A549 (cell line): ENCODE measurements at regions of chr19 and their contacts with region 1.

Region 1: DNA sequence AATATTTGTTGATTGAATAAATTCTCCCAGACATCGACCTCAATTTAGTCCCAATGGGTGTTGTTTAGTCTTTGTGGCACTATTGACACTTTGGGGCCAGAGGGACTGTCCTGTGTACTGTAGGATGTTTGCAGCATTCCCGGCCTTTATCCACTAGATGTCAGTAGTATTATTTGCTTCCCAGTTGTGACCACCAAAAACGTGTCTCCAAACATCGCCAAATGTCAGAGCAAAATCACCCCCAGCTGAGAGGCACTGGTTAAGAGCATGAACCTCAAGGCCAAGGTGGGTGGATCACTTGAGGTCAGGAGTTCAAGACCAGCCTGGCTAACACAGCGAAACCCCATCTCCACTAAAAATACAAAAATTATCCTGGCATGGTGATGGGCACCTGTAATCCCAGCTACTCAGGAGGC is 15.4 kb downstream of the NLRP12 start:
- DNase-seq: peak; percentile 52 to 85
- ATAC-seq: peak; percentile 87 to 91
- H3K4me3 ChIP-seq: no peak overlapping the region
- H3K27ac ChIP-seq: no peak overlapping the region
- H3K4me1 ChIP-seq: no peaks in the 10 kb centered on the region
- CTCF ChIP-seq: peak; percentile 86
- EP300 ChIP-seq: no peak
- POLR2A ChIP-seq: no peak
- RAD21 ChIP-seq: peak; percentile 88 to 98

Region 2: DNA sequence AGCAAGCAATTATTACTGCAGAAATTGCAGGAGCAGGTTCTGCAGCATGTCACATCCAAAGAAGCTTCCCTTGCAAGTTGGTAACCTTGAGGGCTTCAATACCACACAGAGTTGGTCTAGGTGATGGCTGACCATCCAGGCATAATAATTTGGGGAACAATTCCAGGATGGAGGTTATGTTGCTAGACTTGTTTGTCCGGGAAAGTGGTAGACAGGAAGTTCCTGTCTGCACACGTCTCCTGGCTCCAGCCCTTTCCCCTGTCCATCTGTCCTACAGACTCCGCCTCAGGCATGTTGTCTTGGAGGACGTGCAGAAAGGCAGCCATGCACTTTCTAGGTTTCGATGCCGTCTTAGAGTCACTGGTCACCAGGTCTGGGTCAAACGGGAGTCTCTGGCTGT is 150.9 kb before region 1 on chr19:
- CTCF ChIA-PET with region 1: no interaction called
- POLR2A ChIA-PET with region 1: no interaction called
- DNase-seq: no peak
- ATAC-seq: no peak
- H3K4me3 ChIP-seq: no peak overlapping the region
- H3K27ac ChIP-seq: no peak overlapping the region
- H3K4me1 ChIP-seq: no peaks in the 10 kb centered on the region
- CTCF ChIP-seq: no peak
- EP300 ChIP-seq: no peak
- POLR2A ChIP-seq: no peak
- RAD21 ChIP-seq: no peak

Region 3: DNA sequence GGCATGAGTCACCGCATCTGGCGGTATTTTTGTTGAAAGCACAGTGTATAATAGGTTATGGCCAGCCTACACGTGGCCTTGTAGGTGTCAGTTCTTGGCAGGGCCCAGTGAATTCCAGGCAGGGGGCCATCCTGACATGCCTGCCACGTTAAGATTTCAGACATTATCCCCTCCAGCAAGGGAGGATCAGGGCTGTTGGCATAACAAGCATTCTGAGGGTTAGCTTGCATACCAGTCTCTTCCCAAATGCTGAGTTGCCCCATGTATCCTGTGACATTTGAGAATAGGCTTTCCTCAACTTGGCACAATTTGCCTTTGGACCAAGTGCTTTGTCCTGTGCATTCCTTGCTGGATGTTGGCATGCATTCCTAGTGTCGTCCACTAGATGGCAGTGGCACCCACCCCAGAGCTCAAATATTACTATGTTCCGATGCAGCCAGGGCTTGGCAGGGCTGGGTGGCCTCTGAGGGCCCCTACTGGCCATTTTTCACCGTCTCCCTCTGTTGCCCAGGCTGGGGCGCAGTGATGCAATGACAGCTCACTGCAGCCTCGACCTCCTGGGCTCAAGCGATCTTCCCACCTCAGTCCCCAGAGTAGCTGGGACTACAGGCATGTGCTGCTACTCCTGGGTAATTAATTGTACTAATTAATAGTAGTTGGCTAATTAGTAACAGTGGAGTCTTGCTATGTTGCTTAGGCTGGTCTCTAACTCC is 15.8 kb before region 1 on chr19:
- CTCF ChIA-PET with region 1: interaction called, 23 read pairs
- POLR2A ChIA-PET with region 1: no interaction called
- DNase-seq: peak; percentile 73 to 92
- ATAC-seq: peak; percentile 97 to 99
- H3K4me3 ChIP-seq: no peak overlapping the region
- H3K27ac ChIP-seq: no peak overlapping the region
- H3K4me1 ChIP-seq: no peaks in the 10 kb centered on the region
- CTCF ChIP-seq: peak; percentile 98
- EP300 ChIP-seq: no peak
- POLR2A ChIP-seq: no peak
- RAD21 ChIP-seq: peak; percentile 84 to 95

Region 4: DNA sequence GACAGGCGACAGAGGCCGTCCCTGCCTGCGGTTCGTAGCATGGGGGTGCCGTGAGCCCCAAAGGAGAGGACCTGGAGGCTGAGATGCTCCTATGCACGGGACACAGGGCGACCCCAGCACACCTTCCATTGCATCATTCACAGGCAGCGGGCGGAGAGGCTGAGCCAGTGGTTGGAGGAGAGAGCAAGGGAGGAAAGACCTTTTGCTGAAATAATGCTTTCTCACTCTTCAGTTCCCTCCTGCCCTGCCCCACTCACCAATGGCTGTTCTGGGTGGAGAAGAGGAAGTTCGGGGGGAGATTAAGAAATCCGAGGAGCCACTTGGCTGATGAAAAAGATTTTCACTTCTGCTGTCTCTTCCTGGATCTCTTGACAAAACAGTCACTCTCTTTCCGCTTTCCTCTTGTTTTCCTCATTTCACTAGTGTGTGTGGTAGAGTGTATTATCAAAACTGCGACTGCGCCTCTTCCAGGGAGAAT is 15.5 kb after region 1 on chr19 and contains the start of gene NLRP12:
- CTCF ChIA-PET with region 1: interaction called, 47 read pairs
- POLR2A ChIA-PET with region 1: no interaction called
- DNase-seq: no peak
- ATAC-seq: peak in 1 of 2 experiments; percentile 37; a peak in 3 of 6 replicates
- H3K4me3 ChIP-seq: no peak within 1 kb of the TSS
- H3K27ac ChIP-seq: no peak within 1 kb of the TSS
- H3K4me1 ChIP-seq: no peaks in the 10 kb centered on the region
- CTCF ChIP-seq: no peak
- EP300 ChIP-seq: no peak
- POLR2A ChIP-seq: no peak
- RAD21 ChIP-seq: no peak
- polyA plus RNA-seq, gene NLRP12: 0.03 and 0.04 TPM in 2 replicates

Region 5: GRCh38 chr19:53849237-53849676 is 40.5 kb after region 1 on chr19:
- CTCF ChIA-PET with region 1: interaction called, 10 read pairs
- POLR2A ChIA-PET with region 1: no interaction called
- DNase-seq: no peak
- ATAC-seq: no peak
- H3K4me3 ChIP-seq: no peak overlapping the region
- H3K27ac ChIP-seq: no peak overlapping the region
- H3K4me1 ChIP-seq: peaks cover 8% of the 10 kb centered on the region; the same call in 2 of the 3 replicates
- CTCF ChIP-seq: no peak
- EP300 ChIP-seq: no peak
- POLR2A ChIP-seq: no peak
- RAD21 ChIP-seq: no peak

Region 6: GRCh38 chr19:53879140-53880081 is 70.7 kb after region 1 on chr19:
- CTCF ChIA-PET with region 1: interaction called, 32 read pairs
- POLR2A ChIA-PET with region 1: no interaction called
- DNase-seq: peak; percentile 92 to 93
- ATAC-seq: peak; percentile 64 to 78
- H3K4me3 ChIP-seq: peak overlapping the region; percentile 44
- H3K27ac ChIP-seq: peak overlapping the region; percentile 72 to 89
- H3K4me1 ChIP-seq: peaks cover 21% of the 10 kb centered on the region
- CTCF ChIP-seq: no peak
- EP300 ChIP-seq: no peak
- POLR2A ChIP-seq: no peak
- RAD21 ChIP-seq: no peak

Region 7: GRCh38 chr19:54035215-54036178 is 226.8 kb after region 1 on chr19:
- CTCF ChIA-PET with region 1: interaction called, 148 read pairs
- POLR2A ChIA-PET with region 1: no interaction called
- DNase-seq: peak in 1 of 2 experiments; percentile 52
- ATAC-seq: peak; percentile 65 to 88
- H3K4me3 ChIP-seq: no peak overlapping the region
- H3K27ac ChIP-seq: peak overlapping the region; percentile 36 to 59; a peak in 5 of 6 replicates
- H3K4me1 ChIP-seq: peaks cover 9% of the 10 kb centered on the region
- CTCF ChIP-seq: no peak
- EP300 ChIP-seq: no peak
- POLR2A ChIP-seq: no peak
- RAD21 ChIP-seq: no peak

Region 8: GRCh38 chr19:54096617-54097129 is 288.0 kb after region 1 on chr19:
- CTCF ChIA-PET with region 1: interaction called, 35 read pairs
- POLR2A ChIA-PET with region 1: no interaction called
- DNase-seq: peak; percentile 68 to 79
- ATAC-seq: peak; percentile 88 to 89
- H3K4me3 ChIP-seq: peak overlapping the region; percentile 33
- H3K27ac ChIP-seq: peak overlapping the region; percentile 40 to 78; a peak in 5 of 6 replicates
- H3K4me1 ChIP-seq: peaks cover 11% of the 10 kb centered on the region; the same call in 1 of the 3 replicates
- CTCF ChIP-seq: no peak; the same call in 2 of the 3 replicates
- EP300 ChIP-seq: no peak
- POLR2A ChIP-seq: peak; percentile 17; the same call in 1 of the 2 replicates
- RAD21 ChIP-seq: peak in 1 of 2 experiments; percentile 65; a peak in 4 of 5 replicates